ENCODE measurements at regions of chr9 and their contacts with region 1.

Region 1: GRCh38 chr9:77751341-77752091 is 103.4 kb upstream of the GNA14 start:
- DNase-seq: peak; percentile 81
- ATAC-seq: peak; percentile 69
- H3K4me3 ChIP-seq: no peak overlapping the region
- H3K27ac ChIP-seq: no peak overlapping the region
- H3K4me1 ChIP-seq: peaks cover 5% of the 10 kb centered on the region; the same call in 1 of the 2 replicates
- H3K27me3 ChIP-seq: no peaks in the 10 kb centered on the region
- CTCF ChIP-seq: peak; percentile 75
- POLR2A ChIP-seq: no peak
- RAD21 ChIP-seq: peak; percentile 81

Region 2: GRCh38 chr9:77177161-77177893 is 574.2 kb before region 1 on chr9 and contains the start of gene VPS13A:
- CTCF ChIA-PET with region 1: no interaction called
- POLR2A ChIA-PET with region 1: no interaction called
- dilution Hi-C with region 1: no loop called
- in situ Hi-C with region 1: no loop called
- intact Hi-C with region 1: loop called (anchors 10 kb)
- DNase-seq: peak; percentile 91
- ATAC-seq: peak; percentile 92
- H3K4me3 ChIP-seq: peak within 1 kb of the TSS; percentile 80
- H3K27ac ChIP-seq: peak within 1 kb of the TSS; percentile 43
- H3K4me1 ChIP-seq: 0 out of 2 replicates have a peak, but pooled peaks cover 1% of the 10 kb centered on the region
- H3K27me3 ChIP-seq: no peaks in the 10 kb centered on the region
- CTCF ChIP-seq: peak; percentile 34
- POLR2A ChIP-seq: no peak
- RAD21 ChIP-seq: no peak
- total RNA-seq, gene VPS13A: 26.5 and 46.9 TPM in 2 replicates

Region 3: DNA sequence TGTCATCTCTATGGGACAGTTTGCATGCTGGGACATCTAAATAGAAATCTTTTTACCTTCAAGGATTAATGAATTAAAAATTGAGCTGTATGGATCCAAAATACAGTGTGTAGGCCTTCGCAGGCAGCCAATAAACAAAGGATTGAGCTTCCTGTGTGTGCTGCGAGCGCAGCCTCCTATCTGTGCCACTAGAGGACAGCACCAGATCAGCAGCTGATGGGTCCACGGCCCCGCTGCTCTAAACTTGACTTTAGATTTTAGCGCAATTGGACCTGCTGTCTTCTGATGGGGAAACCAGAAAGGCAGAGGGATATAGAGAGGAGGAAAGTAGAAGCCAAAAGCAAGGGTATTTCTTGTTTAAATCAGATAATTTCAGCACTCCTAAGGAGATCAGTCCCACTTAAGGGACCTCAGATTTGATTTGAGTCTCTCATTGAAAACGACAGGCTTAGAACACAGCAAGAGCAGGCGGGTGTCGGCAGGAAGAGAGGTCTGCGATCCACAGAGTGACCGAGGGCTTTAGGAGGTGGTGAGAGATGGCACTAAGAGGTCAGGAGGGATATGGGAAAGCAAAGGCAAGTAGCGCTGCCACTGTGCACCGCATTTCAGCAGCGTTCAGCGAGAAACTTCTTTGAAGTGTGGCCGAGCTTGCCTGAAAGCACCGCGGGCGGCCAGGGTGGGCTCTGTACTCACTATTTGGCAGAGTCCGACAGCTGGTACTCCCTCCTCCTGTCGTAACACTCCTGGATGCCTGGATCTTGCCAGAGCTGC is 317.7 kb before region 1 on chr9:
- CTCF ChIA-PET with region 1: interaction called, 11 read pairs
- POLR2A ChIA-PET with region 1: no interaction called
- dilution Hi-C with region 1: no loop called
- in situ Hi-C with region 1: loop called (anchors 5 kb)
- intact Hi-C with region 1: loop called (anchors 1 kb)
- DNase-seq: peak; percentile 74
- ATAC-seq: peak; percentile 97
- H3K4me3 ChIP-seq: no peak overlapping the region
- H3K27ac ChIP-seq: no peak overlapping the region
- H3K4me1 ChIP-seq: no peaks in the 10 kb centered on the region
- H3K27me3 ChIP-seq: no peaks in the 10 kb centered on the region
- CTCF ChIP-seq: peak; percentile 99
- POLR2A ChIP-seq: peak; percentile 48; the same call in 1 of the 2 replicates
- RAD21 ChIP-seq: peak; percentile 99

Region 4: DNA sequence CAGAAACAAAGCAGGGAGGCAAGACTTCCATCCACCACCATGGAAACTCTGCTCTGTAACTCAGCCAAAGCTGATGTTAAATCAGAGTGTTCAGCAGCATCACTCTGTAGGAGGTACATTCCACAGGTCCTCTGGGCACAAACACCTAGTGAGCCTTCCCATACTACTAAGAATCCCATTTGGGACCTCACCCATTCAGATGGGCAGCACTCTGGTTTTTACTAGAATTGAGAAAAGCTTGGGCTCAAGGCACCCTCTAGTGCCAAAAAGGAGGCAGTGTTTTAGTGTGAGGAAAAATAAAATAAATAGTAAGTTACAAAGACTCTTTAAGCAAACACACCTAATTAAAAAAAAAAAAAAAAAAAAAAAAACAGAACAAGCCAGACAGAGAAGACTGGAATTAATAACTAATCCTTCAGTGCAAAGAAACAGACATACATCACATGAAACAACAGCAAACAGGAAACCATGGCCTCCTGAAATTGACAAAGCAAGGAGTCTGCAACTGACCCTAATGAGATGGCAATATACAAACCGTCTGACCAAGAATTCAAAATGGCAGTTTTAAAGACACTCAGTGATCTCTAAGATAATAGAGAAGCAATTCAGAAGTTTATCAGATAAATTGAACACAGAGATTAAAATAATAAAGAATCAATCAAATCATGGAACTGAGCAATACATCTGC is 262.9 kb before region 1 on chr9:
- CTCF ChIA-PET with region 1: no interaction called
- POLR2A ChIA-PET with region 1: no interaction called
- dilution Hi-C with region 1: no loop called
- in situ Hi-C with region 1: no loop called
- intact Hi-C with region 1: loop called (anchors 1 kb)
- DNase-seq: peak; percentile 20
- ATAC-seq: peak; percentile 68
- H3K4me3 ChIP-seq: no peak overlapping the region
- H3K27ac ChIP-seq: no peak overlapping the region
- H3K4me1 ChIP-seq: no peaks in the 10 kb centered on the region
- H3K27me3 ChIP-seq: no peaks in the 10 kb centered on the region
- CTCF ChIP-seq: peak; percentile 61
- POLR2A ChIP-seq: no peak
- RAD21 ChIP-seq: peak; percentile 64

Region 5: DNA sequence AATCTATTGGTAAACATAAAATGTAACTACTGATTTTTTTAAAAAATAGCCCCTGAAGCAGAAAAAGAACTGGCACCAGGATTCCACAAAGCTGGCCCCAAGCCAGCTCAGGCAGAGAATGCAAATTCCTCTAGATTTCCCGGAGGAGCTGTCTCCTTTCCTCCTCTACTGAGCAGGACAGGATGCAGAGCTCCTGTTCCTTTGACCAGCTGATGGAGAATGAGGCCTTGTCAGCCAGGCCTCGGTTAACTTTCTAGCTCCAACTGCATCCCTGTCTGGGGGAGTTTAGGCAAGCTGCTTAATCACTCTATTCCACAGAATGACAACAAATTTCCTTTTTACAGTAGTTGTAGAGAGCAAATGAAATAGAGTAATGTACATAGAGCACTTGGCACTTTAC is 124.6 kb after region 1 on chr9:
- CTCF ChIA-PET with region 1: no interaction called
- POLR2A ChIA-PET with region 1: no interaction called
- dilution Hi-C with region 1: no loop called
- in situ Hi-C with region 1: no loop called
- intact Hi-C with region 1: no loop called
- DNase-seq: no peak
- ATAC-seq: no peak; the same call in 1 of the 2 replicates
- H3K4me3 ChIP-seq: no peak overlapping the region
- H3K27ac ChIP-seq: no peak overlapping the region
- H3K4me1 ChIP-seq: peaks cover 3% of the 10 kb centered on the region; the same call in 1 of the 2 replicates
- H3K27me3 ChIP-seq: no peaks in the 10 kb centered on the region
- CTCF ChIP-seq: no peak
- POLR2A ChIP-seq: no peak
- RAD21 ChIP-seq: no peak

Region 6: GRCh38 chr9:77926309-77926959 is 174.9 kb after region 1 on chr9:
- CTCF ChIA-PET with region 1: no interaction called
- POLR2A ChIA-PET with region 1: no interaction called
- dilution Hi-C with region 1: no loop called
- in situ Hi-C with region 1: no loop called
- intact Hi-C with region 1: no loop called
- DNase-seq: peak; percentile 76
- ATAC-seq: peak; percentile 87
- H3K4me3 ChIP-seq: no peak overlapping the region
- H3K27ac ChIP-seq: no peak overlapping the region
- H3K4me1 ChIP-seq: peaks cover 7% of the 10 kb centered on the region
- H3K27me3 ChIP-seq: no peaks in the 10 kb centered on the region
- CTCF ChIP-seq: no peak
- POLR2A ChIP-seq: no peak
- RAD21 ChIP-seq: no peak

Region 7: DNA sequence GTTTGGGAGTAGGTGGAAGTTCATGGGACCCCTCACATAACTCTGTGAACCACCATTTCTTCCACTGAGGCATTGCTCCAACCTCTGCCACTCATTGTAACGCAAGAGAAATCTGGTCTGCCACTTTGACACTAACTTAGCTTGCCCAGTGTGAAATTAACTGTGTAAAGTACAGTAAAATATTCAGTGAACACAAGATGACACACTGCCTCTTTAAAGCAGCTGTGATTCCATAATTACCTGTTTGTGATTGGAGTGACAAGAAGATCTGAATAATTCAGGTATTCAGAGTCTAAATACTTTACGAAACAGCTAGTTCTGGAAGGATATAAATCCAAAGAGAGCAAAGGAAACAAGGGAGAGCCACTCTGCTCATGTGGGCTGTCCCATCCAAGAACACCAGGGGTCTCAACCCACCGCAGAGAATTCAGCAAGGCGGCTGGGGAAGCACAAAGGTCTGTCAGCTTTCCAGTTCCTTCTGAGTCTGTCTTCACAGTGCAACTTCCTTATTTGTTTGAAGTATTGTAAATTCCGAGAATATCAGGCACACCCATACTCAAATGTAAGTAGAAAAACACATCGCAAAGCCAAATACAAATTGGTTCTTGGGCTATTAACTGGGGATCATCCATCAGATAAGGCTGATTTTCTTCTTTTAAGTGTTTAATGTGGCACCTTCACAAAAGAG is 193.2 kb after region 1 on chr9:
- CTCF ChIA-PET with region 1: no interaction called
- POLR2A ChIA-PET with region 1: no interaction called
- dilution Hi-C with region 1: no loop called
- in situ Hi-C with region 1: no loop called
- intact Hi-C with region 1: no loop called
- DNase-seq: no peak
- ATAC-seq: no peak
- H3K4me3 ChIP-seq: no peak overlapping the region
- H3K27ac ChIP-seq: no peak overlapping the region
- H3K4me1 ChIP-seq: peaks cover 11% of the 10 kb centered on the region
- H3K27me3 ChIP-seq: no peaks in the 10 kb centered on the region
- CTCF ChIP-seq: no peak
- POLR2A ChIP-seq: no peak
- RAD21 ChIP-seq: no peak

Region 8: DNA sequence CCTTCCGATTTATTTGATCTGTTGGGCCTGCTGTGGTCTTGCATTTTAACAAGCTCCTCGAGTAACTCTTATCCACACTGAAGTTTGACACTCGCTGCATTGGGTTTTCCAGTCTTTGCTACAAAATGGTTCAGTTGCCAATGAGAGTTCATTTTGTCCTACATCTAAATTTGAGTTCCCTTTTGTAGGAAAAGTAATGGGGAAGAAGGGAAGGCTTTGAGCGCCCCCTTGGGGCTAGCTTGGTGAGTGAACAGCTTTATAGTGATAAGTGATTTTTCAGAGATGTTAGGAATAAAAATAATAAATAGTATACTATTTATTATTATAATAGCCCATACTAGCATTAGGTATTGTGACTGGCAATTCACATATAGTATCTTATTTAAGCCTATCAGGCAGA is 370.0 kb after region 1 on chr9:
- CTCF ChIA-PET with region 1: no interaction called
- POLR2A ChIA-PET with region 1: no interaction called
- dilution Hi-C with region 1: no loop called
- in situ Hi-C with region 1: no loop called
- intact Hi-C with region 1: loop called (anchors 5 kb)
- DNase-seq: peak; percentile 58
- ATAC-seq: peak; percentile 70; the same call in 1 of the 2 replicates
- H3K4me3 ChIP-seq: no peak overlapping the region
- H3K27ac ChIP-seq: no peak overlapping the region
- H3K4me1 ChIP-seq: no peaks in the 10 kb centered on the region
- H3K27me3 ChIP-seq: peaks cover 6% of the 10 kb centered on the region
- CTCF ChIP-seq: peak; percentile 79
- POLR2A ChIP-seq: no peak
- RAD21 ChIP-seq: peak; percentile 81

Region 9: DNA sequence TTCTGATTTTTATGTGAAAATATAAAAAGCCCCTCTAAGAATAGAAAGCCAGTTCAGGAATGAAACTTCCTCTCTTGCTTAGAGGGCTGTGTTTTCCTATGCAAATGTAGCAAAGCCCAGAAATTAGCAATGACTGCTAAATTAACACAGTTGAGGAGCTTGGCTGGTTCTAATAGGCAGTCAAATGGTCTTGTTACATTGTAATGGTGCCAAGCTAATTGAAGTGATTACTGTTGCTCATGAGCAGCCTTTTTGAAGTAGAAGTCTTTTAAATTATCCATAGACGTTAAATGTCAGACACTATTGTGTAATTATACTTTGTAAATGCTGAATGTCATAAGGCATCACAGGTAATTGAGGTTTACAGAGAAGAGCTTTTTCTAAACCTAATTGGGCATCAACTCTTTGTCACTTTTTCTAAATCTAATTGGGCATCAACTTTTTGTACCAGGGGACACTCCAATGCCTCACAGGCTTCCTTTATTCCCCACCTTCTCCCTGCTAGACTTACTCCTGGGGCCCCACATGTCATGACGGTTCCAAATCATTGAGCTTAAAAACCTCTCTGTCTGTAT is 774.6 kb after region 1 on chr9:
- CTCF ChIA-PET with region 1: no interaction called
- POLR2A ChIA-PET with region 1: no interaction called
- dilution Hi-C with region 1: no loop called
- in situ Hi-C with region 1: no loop called
- intact Hi-C with region 1: no loop called
- DNase-seq: no peak
- ATAC-seq: no peak
- H3K4me3 ChIP-seq: no peak overlapping the region
- H3K27ac ChIP-seq: no peak overlapping the region
- H3K4me1 ChIP-seq: no peaks in the 10 kb centered on the region
- H3K27me3 ChIP-seq: no peaks in the 10 kb centered on the region
- CTCF ChIP-seq: no peak
- POLR2A ChIP-seq: no peak
- RAD21 ChIP-seq: no peak

Measured in IMR-90 (cell line).